HepG2 (cell line): ENCODE measurements at regions of chr5 and their contacts with region 1.

Region 1: DNA sequence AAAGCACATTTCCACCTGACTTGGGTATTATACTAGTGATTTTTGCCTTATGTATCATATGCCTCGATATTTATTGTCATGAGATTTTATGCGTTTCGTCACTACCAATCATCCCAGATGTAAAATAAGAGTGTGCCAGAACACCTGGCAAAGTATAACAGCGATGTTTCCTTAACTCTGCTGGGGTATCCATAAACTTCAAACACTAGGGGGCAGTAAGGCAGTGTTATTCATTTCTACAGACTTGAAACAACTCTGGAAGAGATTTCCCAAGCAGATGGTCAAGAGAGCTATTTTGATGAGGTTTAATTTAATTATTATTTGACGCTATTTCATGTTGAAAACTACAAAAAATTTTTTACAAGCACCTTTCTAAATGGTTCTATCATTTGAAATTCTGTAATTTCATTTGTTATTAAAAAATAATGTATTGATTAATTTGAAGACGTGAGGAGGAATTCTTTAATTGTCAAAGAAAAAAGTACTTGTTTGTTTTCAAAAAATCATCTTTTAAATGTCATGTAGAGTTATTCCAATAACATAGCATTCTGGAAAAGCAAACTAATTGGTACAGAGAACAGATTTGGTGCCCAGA is 388.5 kb upstream of the CTNND2 start:
- DNase-seq: no peak
- ATAC-seq: no peak
- H3K4me3 ChIP-seq: no peak overlapping the region
- H3K27ac ChIP-seq: no peak overlapping the region
- H3K4me1 ChIP-seq: no peaks in the 10 kb centered on the region
- H3K27me3 ChIP-seq: no peaks in the 10 kb centered on the region
- CTCF ChIP-seq: no peak
- EP300 ChIP-seq: no peak
- POLR2A ChIP-seq: no peak
- RAD21 ChIP-seq: no peak

Region 2: GRCh38 chr5:11054014-11054413 is 1238.7 kb before region 1 on chr5:
- CTCF ChIA-PET with region 1: no interaction called
- POLR2A ChIA-PET with region 1: no interaction called
- in situ Hi-C with region 1: no loop called
- intact Hi-C with region 1: no loop called
- DNase-seq: no peak
- ATAC-seq: no peak
- H3K4me3 ChIP-seq: no peak overlapping the region
- H3K27ac ChIP-seq: no peak overlapping the region
- H3K4me1 ChIP-seq: no peaks in the 10 kb centered on the region
- H3K27me3 ChIP-seq: no peaks in the 10 kb centered on the region
- CTCF ChIP-seq: no peak
- EP300 ChIP-seq: no peak
- POLR2A ChIP-seq: no peak
- RAD21 ChIP-seq: no peak

Region 3: DNA sequence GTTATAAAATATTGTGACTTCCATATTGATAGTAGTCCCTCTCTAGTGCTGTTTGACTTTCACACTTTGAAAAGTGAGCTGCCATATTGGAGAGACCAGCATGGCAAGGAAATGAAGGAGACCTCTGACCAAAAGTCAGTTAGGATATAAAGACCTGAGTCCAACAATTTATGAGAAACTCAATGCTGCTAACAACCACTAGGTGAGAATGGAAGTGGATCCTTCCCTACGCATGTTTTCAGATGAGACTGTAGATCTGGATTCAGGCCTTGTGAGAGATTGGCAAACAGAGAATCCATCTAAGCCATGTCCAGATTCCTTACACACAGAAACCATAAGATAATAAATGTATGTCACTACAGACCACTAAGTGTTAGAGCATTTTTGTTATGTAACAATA is 470.1 kb before region 1 on chr5:
- CTCF ChIA-PET with region 1: no interaction called
- POLR2A ChIA-PET with region 1: no interaction called
- in situ Hi-C with region 1: no loop called
- intact Hi-C with region 1: no loop called
- DNase-seq: no peak
- ATAC-seq: no peak
- H3K4me3 ChIP-seq: no peak overlapping the region
- H3K27ac ChIP-seq: no peak overlapping the region
- H3K4me1 ChIP-seq: no peaks in the 10 kb centered on the region
- H3K27me3 ChIP-seq: no peaks in the 10 kb centered on the region
- CTCF ChIP-seq: no peak
- EP300 ChIP-seq: no peak
- POLR2A ChIP-seq: no peak
- RAD21 ChIP-seq: no peak

Region 4: DNA sequence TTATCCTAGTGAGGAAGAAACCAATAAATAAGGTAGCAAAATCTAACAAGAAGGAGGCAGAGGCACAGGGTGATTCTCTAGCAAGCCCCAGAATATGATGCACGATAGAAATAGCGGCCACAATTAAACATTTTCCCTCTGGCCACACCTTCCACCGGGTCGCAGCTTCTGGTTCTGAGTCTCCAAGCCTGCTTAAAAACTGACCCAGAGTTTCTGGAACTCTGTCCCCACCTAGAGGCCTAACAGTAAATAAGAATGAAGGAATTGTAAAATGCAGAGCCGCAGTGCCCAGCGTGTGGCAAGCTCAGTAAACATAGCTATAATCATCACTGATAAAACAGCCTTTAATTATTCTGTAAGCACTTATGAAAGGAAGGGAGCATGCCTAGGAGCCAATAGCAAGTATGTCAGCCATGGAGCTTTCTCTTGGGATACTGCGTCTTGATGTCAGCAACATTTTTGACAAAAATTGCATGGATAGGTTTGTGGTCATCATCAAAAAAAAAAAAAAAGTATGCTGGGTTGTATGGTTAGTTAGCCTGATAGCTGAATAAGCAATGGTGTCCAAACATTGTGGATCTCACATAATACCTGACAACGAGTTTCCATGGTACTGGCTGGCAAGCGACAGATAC is 1186.2 kb after region 1 on chr5:
- CTCF ChIA-PET with region 1: no interaction called
- POLR2A ChIA-PET with region 1: no interaction called
- in situ Hi-C with region 1: no loop called
- intact Hi-C with region 1: loop called (anchors 5 kb)
- DNase-seq: peak; percentile 24
- ATAC-seq: peak; percentile 85
- H3K4me3 ChIP-seq: no peak overlapping the region
- H3K27ac ChIP-seq: no peak overlapping the region
- H3K4me1 ChIP-seq: no peaks in the 10 kb centered on the region
- H3K27me3 ChIP-seq: no peaks in the 10 kb centered on the region
- CTCF ChIP-seq: peak; percentile 52
- EP300 ChIP-seq: no peak
- POLR2A ChIP-seq: no peak
- RAD21 ChIP-seq: no peak